MCF 10A (cell line): ENCODE measurements at regions of chr5 and their contacts with region 1.

Region 1: GRCh38 chr5:90264689-90265544 is 144.6 kb downstream of the CETN3 start:
- DNase-seq: peak; percentile 67
- H3K4me3 Mint-ChIP-seq: no peak overlapping the region
- H3K27ac Mint-ChIP-seq: no peak overlapping the region
- H3K4me1 Mint-ChIP-seq: no peaks in the 10 kb centered on the region
- H3K27me3 Mint-ChIP-seq: peaks cover 38% of the 10 kb centered on the region
- CTCF ChIP-seq: peak; percentile 85

Region 2: GRCh38 chr5:88883059-88883835 is 1381.7 kb before region 1 on chr5 and contains the start of gene MEF2C:
- CTCF ChIA-PET with region 1: no interaction called
- POLR2A ChIA-PET with region 1: no interaction called
- intact Hi-C with region 1: loop called (anchors 10 kb)
- DNase-seq: no peak
- H3K4me3 Mint-ChIP-seq: peak within 1 kb of the TSS; percentile 68
- H3K27ac Mint-ChIP-seq: no peak within 1 kb of the TSS
- H3K4me1 Mint-ChIP-seq: no peaks in the 10 kb centered on the region
- H3K27me3 Mint-ChIP-seq: peaks cover 62% of the 10 kb centered on the region
- CTCF ChIP-seq: no peak
- total RNA-seq, gene MEF2C: 0.05 and 0.07 TPM in 2 replicates

Region 3: GRCh38 chr5:89735082-89735481 is 529.8 kb before region 1 on chr5:
- CTCF ChIA-PET with region 1: interaction called, 5 read pairs
- POLR2A ChIA-PET with region 1: no interaction called
- intact Hi-C with region 1: loop called (anchors 2 kb)
- DNase-seq: peak; percentile 75
- H3K4me3 Mint-ChIP-seq: no peak overlapping the region
- H3K27ac Mint-ChIP-seq: no peak overlapping the region
- H3K4me1 Mint-ChIP-seq: no peaks in the 10 kb centered on the region
- H3K27me3 Mint-ChIP-seq: no peaks in the 10 kb centered on the region
- CTCF ChIP-seq: no peak

Region 4: DNA sequence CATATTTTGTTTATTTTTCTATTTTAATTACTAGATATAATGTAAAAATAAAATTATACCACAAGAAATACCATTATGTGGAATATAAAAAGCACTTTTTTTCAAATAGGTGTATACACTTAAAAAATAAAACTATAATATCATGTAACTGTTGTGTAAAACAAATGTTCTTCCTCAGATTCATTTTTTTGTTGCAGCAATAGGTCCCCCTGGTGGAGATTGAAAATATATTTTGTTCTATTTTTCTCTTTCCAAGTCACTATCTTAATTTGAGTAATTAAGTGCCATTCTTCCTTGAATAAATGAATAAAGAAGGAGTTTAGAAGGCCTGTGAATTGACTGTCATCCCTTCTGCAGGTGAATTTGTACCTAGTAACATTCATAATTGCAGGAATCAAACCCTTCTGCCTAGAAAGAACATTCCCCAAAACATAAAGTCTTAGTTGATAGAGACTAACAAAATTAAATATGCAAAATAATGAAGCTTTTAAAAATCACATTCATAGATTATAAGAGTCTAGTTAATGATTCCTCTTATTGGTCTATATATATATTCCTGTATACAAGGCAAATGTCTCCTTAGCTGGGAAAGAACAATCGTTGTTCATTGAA is 121.3 kb after region 1 on chr5:
- CTCF ChIA-PET with region 1: interaction called, 6 read pairs
- POLR2A ChIA-PET with region 1: no interaction called
- intact Hi-C with region 1: loop called (anchors 5 kb)
- DNase-seq: peak; percentile 32
- H3K4me3 Mint-ChIP-seq: no peak overlapping the region
- H3K27ac Mint-ChIP-seq: no peak overlapping the region
- H3K4me1 Mint-ChIP-seq: no peaks in the 10 kb centered on the region
- H3K27me3 Mint-ChIP-seq: no peaks in the 10 kb centered on the region
- CTCF ChIP-seq: peak; percentile 36

Region 5: GRCh38 chr5:90461292-90461691 is 196.4 kb after region 1 on chr5:
- CTCF ChIA-PET with region 1: no interaction called
- POLR2A ChIA-PET with region 1: no interaction called
- intact Hi-C with region 1: no loop called
- DNase-seq: no peak
- H3K4me3 Mint-ChIP-seq: no peak overlapping the region
- H3K27ac Mint-ChIP-seq: peak overlapping the region; percentile 81
- H3K4me1 Mint-ChIP-seq: no peaks in the 10 kb centered on the region
- H3K27me3 Mint-ChIP-seq: no peaks in the 10 kb centered on the region
- CTCF ChIP-seq: no peak